HepG2 (cell line): ENCODE measurements at regions of chr12 and their contacts with region 1.

Region 1: DNA sequence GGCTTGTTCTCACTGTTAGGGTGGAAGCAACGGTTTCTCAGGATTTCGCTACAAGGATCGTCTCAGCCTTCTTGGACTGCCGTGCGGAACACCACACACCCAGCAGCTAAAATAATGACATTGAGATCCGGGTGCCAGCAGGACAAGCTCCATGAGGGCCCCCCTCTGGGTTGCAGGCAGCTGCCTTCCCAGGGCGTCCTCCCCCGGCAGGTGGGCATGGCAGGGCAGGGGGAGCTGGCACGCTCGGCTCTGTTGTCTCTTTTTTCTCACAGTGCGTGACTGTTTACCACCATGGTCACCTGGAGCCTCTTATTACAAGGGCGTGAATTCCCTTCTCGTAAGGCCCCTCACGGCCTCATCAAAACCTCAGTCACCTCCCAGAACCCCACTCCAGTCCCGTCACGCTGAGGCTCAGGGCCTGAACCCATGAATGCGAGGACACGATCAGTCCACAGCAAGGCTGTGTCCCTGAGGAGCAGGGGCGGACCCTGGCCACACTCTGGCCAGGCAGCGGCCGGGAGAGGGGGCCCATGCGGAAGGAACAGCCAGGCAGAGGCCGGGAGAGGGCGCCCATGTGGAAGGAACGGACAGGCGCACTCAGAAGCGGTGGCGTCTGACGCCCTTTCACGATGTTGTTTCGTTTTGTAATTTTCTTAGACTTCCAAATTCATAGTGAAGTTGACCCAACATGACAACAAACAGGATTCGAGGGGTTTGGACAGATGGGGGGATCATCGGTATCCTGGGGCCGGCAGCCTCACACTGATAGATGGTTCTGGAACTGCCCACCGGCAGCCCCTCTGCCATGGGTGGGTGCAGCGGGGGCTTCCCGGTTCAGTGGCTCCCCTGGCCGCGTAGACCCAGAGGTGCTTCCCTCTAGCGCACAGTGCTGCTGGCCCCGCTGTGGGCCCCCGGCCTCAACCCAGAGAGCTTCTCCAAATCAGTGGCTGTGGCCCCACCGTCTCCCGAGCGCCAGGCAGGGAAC is 10.0 kb downstream of the LRCOL1 start:
- DNase-seq: peak; percentile 54
- ATAC-seq: peak; percentile 91
- H3K4me3 ChIP-seq: peak overlapping the region; percentile 32 to 62 (median 49); a peak in 5 of 6 replicates
- H3K27ac ChIP-seq: no peak overlapping the region
- H3K4me1 ChIP-seq: peaks cover 53% of the 10 kb centered on the region
- H3K27me3 ChIP-seq: peaks cover 4 to 55% of the 10 kb centered on the region in 2 experiments; a peak in 4 of 5 replicates
- CTCF ChIP-seq: peak; percentile 97
- EP300 ChIP-seq: no peak
- POLR2A ChIP-seq: no peak
- RAD21 ChIP-seq: peak; percentile 90

Region 2: GRCh38 chr12:132614861-132615578 is 14.7 kb after region 1 on chr12:
- CTCF ChIA-PET with region 1: interaction called, 36 read pairs
- POLR2A ChIA-PET with region 1: interaction called, 3 read pairs
- in situ Hi-C with region 1: no loop called
- intact Hi-C with region 1: loop called (anchors 1 kb)
- DNase-seq: peak; percentile 76
- ATAC-seq: peak; percentile 88
- H3K4me3 ChIP-seq: no peak overlapping the region
- H3K27ac ChIP-seq: no peak overlapping the region
- H3K4me1 ChIP-seq: no peaks in the 10 kb centered on the region
- H3K27me3 ChIP-seq: peaks cover 0 to 9% of the 10 kb centered on the region in 2 experiments; a peak in 4 of 5 replicates
- CTCF ChIP-seq: peak; percentile 96
- EP300 ChIP-seq: no peak
- POLR2A ChIP-seq: no peak
- RAD21 ChIP-seq: peak; percentile 91

Region 3: DNA sequence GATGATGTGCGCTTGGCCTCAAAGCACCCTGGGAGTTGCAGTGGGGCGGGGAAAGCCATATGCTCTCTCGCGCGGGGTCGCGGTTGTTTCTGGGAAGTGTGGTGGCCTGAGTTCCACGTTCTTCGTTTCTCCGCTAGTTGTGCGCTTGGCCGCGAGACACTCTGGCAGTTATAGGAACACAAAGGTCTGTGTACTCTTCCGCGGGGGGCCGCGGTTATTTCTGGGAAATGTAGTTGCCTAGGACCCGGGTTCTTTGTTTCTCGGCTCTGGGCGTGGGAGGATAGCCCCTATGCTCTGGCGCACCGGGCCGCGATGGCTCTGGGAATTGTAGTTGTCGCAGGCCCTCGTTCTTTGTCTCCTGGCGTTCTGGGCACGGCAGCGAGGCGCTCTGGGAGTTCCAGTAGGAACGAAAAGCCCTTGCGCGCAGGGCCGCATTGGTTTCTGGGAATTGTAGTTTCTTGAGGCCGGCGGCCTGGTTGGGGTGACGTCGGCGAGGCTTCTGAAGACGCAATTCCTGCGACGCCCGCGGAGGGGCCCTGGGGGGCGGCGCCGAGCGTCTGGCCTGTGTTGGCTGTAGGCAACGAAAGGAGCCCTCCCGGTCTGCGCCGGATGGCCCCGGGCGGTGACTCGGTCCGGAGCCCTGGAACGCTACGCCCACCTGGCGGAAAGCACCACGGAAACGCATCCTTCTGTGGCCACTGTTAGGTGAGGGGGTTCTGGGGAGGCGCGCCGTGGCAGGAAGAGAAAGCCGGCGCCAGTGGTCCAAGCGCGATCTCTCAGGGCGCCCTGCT is 480.2 kb after region 1 on chr12 and contains the start of gene ZNF140:
- CTCF ChIA-PET with region 1: no interaction called
- POLR2A ChIA-PET with region 1: no interaction called
- in situ Hi-C with region 1: no loop called
- intact Hi-C with region 1: no loop called
- DNase-seq: peak; percentile 94
- ATAC-seq: peak; percentile 84
- H3K4me3 ChIP-seq: peak within 1 kb of the TSS; percentile 93 to 96 (median 95)
- H3K27ac ChIP-seq: peak within 1 kb of the TSS; percentile 98
- H3K4me1 ChIP-seq: peaks cover 14% of the 10 kb centered on the region
- H3K27me3 ChIP-seq: no peaks in the 10 kb centered on the region
- CTCF ChIP-seq: no peak; the same call in 1 of the 2 replicates
- EP300 ChIP-seq: no peak
- POLR2A ChIP-seq: peak; percentile 24 to 80
- RAD21 ChIP-seq: peak; percentile 47
- total RNA-seq, gene ZNF140: 13.5 and 20.7 TPM in 2 replicates